ENCODE measurements at regions of chr11 and their contacts with region 1.

Region 1: DNA sequence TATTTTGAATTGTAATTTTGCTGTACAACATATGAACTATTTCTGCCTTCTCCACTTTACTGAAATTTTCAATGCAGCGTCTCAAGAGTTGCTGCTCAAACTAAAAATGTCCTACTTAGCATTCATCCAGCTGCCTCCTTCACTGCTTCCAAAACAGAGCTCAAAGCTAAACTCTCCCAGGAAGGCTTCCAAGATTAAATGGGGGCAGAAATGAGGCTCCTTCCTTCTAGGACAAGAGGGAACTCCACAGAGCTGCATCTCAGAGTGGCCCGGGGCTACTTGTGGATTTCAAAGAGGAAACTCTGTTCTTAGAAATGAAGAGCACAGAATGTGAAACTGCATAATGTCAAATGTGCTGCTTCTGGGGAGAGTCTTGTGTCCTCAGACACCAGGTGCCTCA is 295.9 kb upstream of the NCAM1 start:
- DNase-seq: no peak
- ATAC-seq: no peak
- H3K4me3 ChIP-seq: no peak overlapping the region
- H3K27ac ChIP-seq: no peak overlapping the region
- H3K4me1 ChIP-seq: no peaks in the 10 kb centered on the region
- H3K27me3 ChIP-seq: no peaks in the 10 kb centered on the region
- CTCF ChIP-seq: no peak
- POLR2A ChIP-seq: no peak

Region 2: DNA sequence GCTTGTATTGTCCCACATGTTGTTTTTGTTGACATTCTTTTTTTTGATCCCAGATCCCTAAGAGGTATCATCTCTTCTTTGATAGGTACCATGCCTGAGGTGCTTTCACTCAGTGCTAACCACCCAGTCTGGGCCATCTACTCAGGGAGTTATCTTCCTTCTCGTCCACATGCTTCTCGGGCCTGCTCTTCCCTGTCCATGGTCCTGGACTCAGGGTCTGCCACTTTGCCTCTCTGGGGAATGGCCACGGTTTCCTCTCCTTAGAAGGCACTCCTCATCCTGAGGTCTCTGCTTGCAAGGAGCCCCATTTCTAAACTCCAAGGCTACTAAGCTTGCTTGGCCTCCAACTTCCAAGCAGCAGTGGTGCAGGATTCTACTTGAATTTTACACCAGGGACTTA is 68.9 kb after region 1 on chr11:
- intact Hi-C with region 1: loop called in 1 of 10 experiments (anchors 5 kb)
- DNase-seq: peak in 4 of 5 donors; percentile 30 to 56 (median 37)
- ATAC-seq: peak in 3 of 4 donors; percentile 63 to 78 (median 71)
- H3K4me3 ChIP-seq: no peak overlapping the region
- H3K27ac ChIP-seq: no peak overlapping the region
- H3K4me1 ChIP-seq: no peaks in the 10 kb centered on the region
- H3K27me3 ChIP-seq: no peaks in the 10 kb centered on the region
- CTCF ChIP-seq: no peak
- POLR2A ChIP-seq: no peak

Region 3: GRCh38 chr11:112744041-112744440 is 78.8 kb after region 1 on chr11:
- intact Hi-C with region 1: loop called in 1 of 10 experiments (anchors 5 kb)
- DNase-seq: no peak
- ATAC-seq: no peak
- H3K4me3 ChIP-seq: no peak overlapping the region
- H3K27ac ChIP-seq: no peak overlapping the region
- H3K4me1 ChIP-seq: peaks cover 0 to 8% (median 0%) of the 10 kb centered on the region in 12 donors
- H3K27me3 ChIP-seq: no peaks in the 10 kb centered on the region
- CTCF ChIP-seq: no peak
- POLR2A ChIP-seq: no peak

Measured in heart left ventricle (tissue), 16 donors.